ENCODE measurements at regions of chr5 and their contacts with region 1.

Region 1: GRCh38 chr5:56900858-56901578 is 8.4 kb upstream of the SETD9 start:
- DNase-seq: peak in 7 of 14 experiments; percentile 2 to 75 (median 59)
- ATAC-seq: peak; percentile 68
- H3K4me3 ChIP-seq: no peak overlapping the region
- H3K4me3 Mint-ChIP-seq: no peak overlapping the region
- H3K27ac ChIP-seq: no peak overlapping the region
- H3K27ac Mint-ChIP-seq: no peak overlapping the region
- H3K4me1 ChIP-seq: peaks cover 4% of the 10 kb centered on the region
- H3K4me1 Mint-ChIP-seq: no peaks in the 10 kb centered on the region
- H3K27me3 ChIP-seq: no peaks in the 10 kb centered on the region
- H3K27me3 Mint-ChIP-seq: no peaks in the 10 kb centered on the region
- CTCF ChIP-seq: peak; percentile 75

Region 2: DNA sequence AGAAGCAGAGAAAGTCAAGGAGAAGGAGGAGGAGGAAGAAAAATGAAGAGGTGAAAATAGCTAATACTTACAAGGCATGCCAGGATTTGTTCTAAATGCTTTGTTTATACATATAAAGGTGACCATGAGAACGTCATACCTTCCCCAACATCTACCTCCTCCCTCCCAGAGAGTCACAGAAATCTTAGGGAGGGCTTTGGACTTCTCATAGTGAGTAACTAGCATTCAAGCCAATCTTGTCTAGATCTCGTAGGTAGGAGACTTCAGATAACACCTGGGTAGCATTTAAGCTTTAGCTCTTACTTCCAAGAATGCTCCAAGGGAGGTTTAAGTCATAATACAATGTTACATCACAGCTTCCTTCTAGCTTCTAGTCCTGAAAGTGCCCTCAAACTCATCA is 236.4 kb after region 1 on chr5:
- CTCF ChIA-PET with region 1: interaction called, 5 read pairs
- POLR2A ChIA-PET with region 1: no interaction called
- intact Hi-C with region 1: loop called (anchors 1 kb)
- DNase-seq: no peak
- ATAC-seq: no peak
- H3K4me3 ChIP-seq: no peak overlapping the region
- H3K4me3 Mint-ChIP-seq: no peak overlapping the region
- H3K27ac ChIP-seq: no peak overlapping the region
- H3K27ac Mint-ChIP-seq: no peak overlapping the region
- H3K4me1 ChIP-seq: no peaks in the 10 kb centered on the region
- H3K4me1 Mint-ChIP-seq: no peaks in the 10 kb centered on the region
- H3K27me3 ChIP-seq: peaks cover 0 to 2% of the 10 kb centered on the region in 2 experiments
- H3K27me3 Mint-ChIP-seq: peaks cover 3% of the 10 kb centered on the region
- CTCF ChIP-seq: no peak

Measured in CD4-positive, alpha-beta T cell (primary cell).